ENCODE measurements at regions of chr17 and their contacts with region 1.

Region 1: DNA sequence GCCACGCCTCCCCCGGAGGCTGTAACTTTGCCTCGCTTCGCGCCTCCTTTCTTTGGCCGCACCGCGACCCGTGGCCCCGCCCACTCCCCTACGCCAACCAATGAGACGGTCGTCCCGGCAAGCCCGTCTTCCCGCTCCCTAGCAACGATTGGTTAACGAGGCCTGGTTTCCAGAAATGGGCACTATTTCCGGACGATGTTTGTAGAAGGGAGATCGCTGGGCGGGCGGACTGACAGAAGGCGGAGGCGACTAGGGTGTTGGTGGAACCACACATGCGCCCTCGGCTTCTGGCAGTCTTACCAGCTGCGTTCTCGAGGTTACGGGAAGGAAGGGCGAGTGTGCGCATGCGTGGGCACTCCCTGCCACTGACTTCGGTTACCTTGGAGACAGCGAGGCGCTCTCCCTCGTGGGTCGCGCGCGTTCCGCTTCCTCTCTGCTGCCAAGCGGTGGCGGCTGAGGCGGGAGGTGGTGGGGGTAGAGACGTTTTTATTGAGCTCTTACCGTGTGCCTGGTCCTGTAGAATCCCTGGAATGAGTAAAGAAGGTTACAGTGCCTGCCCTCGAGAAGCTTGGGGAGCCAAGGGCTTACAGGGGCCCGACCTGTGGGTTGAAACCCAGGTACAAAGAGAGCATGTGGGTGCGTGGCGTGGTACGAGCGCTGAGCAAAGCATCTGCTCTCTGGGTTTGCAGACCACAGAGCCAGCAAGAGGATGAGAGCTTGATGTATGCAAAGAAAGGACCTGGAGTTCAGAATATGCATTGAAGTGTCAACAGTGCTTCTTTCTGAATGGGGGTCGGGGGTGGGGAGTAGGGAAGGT is 500 bp upstream of the MAP3K14 start:
- DNase-seq: peak; percentile 100
- ATAC-seq: peak; percentile 80
- H3K4me3 ChIP-seq: peak overlapping the region; percentile 32 to 90 (median 62)
- H3K4me3 Mint-ChIP-seq: peak overlapping the region; percentile 92
- H3K27ac ChIP-seq: peak overlapping the region; percentile 47 to 93
- H3K27ac Mint-ChIP-seq: peak overlapping the region; percentile 95
- H3K4me1 ChIP-seq: peaks cover 39 to 41% of the 10 kb centered on the region in 2 donors
- H3K4me1 Mint-ChIP-seq: peaks cover 48% of the 10 kb centered on the region
- H3K27me3 ChIP-seq: no peaks in the 10 kb centered on the region
- H3K27me3 Mint-ChIP-seq: no peaks in the 10 kb centered on the region
- CTCF ChIP-seq: no peak

Region 2: DNA sequence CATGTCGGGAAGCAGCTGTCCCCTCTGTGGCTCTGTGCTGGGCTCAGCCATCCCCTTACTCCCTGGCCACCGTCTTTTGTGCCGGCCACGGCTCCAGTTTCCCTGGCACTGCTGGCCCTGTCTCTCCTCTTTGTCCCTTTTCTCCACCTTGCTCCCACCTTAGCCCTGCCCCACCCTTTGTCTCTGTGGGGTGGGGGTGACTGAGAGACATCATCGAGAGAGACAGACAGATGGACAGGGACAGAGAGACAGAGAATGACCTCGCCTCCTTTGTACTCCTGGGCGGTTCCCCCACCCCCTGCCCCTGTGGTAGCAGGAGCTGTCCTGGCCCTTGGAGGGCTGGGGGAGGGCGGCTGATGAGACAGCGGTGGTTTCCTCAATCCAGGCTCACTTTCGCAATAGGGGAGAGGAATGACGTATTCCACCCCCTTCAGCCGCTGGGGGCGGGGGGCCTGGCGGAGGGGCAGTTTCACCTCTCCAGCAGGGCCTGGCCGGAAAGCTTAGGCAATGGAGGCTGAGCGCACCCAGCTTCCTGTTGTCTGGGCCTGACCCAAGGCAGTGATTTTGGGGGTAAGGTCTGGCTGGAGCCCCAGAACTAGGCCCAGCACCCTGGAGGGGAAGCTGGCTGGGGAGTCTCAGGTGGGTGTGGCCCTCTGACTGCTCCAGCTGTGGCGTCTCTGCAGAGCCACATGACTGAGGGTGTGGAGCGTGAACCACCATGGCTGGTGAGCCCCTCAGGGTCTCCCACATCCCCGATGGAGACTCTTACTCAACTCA is 88.4 kb before region 1 on chr17:
- CTCF ChIA-PET with region 1: interaction called, 13 read pairs
- POLR2A ChIA-PET with region 1: interaction called, 17 read pairs
- intact Hi-C with region 1: loop called (anchors 1 kb)
- DNase-seq: peak; percentile 94
- ATAC-seq: peak; percentile 52
- H3K4me3 ChIP-seq: peak overlapping the region; percentile 8 to 96 (median 90)
- H3K4me3 Mint-ChIP-seq: peak overlapping the region; percentile 100
- H3K27ac ChIP-seq: peak overlapping the region; percentile 99 to 100
- H3K27ac Mint-ChIP-seq: peak overlapping the region; percentile 99
- H3K4me1 ChIP-seq: peaks cover 70 to 90% of the 10 kb centered on the region in 2 donors
- H3K4me1 Mint-ChIP-seq: peaks cover 95% of the 10 kb centered on the region
- H3K27me3 ChIP-seq: no peaks in the 10 kb centered on the region
- H3K27me3 Mint-ChIP-seq: no peaks in the 10 kb centered on the region
- CTCF ChIP-seq: no peak

Region 3: DNA sequence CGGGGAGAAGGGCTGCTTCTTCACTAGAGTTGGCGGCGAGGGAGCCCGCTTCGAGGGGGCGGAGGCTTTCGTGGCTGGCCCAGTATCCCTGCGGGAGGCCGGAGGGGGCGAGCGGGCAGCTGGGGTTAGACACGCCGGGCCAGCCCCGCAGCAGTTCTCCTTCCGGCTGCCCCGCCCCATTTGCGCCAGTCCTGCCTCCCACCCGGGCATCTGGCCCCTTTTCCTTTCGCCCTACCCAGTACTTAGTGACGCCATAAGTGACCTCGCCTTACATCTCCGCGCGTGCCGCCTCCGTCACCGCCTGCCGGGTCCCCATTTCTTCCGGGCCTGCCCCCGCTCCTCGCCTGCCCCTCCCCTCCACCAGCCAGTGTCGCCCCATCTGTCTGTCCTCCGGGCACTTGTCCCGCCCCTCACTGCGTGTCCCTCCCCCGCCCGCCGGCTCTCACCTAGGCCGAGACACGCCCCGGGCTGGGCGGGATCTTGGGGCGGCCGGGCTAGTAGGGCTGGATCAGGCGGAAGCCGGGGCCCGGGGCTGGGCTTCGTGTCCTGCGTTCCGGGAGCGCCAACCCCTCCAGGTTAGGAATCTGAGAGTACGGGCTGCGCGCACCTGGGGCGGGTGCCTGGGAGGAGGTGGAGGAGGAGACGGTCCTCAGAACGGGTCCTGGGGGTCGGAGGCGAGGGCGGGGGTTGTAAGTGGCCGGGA is 69.7 kb before region 1 on chr17:
- CTCF ChIA-PET with region 1: no interaction called
- POLR2A ChIA-PET with region 1: interaction called, 4 read pairs
- intact Hi-C with region 1: loop called (anchors 1 kb)
- DNase-seq: peak; percentile 97
- ATAC-seq: peak; percentile 88
- H3K4me3 ChIP-seq: peak overlapping the region; percentile 2 to 81 (median 78)
- H3K4me3 Mint-ChIP-seq: peak overlapping the region; percentile 92
- H3K27ac ChIP-seq: peak overlapping the region; percentile 82 to 92
- H3K27ac Mint-ChIP-seq: peak overlapping the region; percentile 96
- H3K4me1 ChIP-seq: peaks cover 20 to 22% of the 10 kb centered on the region in 2 donors
- H3K4me1 Mint-ChIP-seq: peaks cover 34% of the 10 kb centered on the region
- H3K27me3 ChIP-seq: no peaks in the 10 kb centered on the region
- H3K27me3 Mint-ChIP-seq: no peaks in the 10 kb centered on the region
- CTCF ChIP-seq: no peak

Region 4: GRCh38 chr17:45293413-45294211 is 23.7 kb before region 1 on chr17:
- CTCF ChIA-PET with region 1: interaction called, 38 read pairs
- POLR2A ChIA-PET with region 1: interaction called, 16 read pairs
- intact Hi-C with region 1: loop called (anchors 1 kb)
- DNase-seq: no peak
- ATAC-seq: no peak
- H3K4me3 ChIP-seq: no peak overlapping the region
- H3K4me3 Mint-ChIP-seq: peak overlapping the region; percentile 56
- H3K27ac ChIP-seq: no peak overlapping the region
- H3K27ac Mint-ChIP-seq: peak overlapping the region; percentile 86
- H3K4me1 ChIP-seq: peaks cover 75 to 84% of the 10 kb centered on the region in 2 donors
- H3K4me1 Mint-ChIP-seq: peaks cover 78% of the 10 kb centered on the region
- H3K27me3 ChIP-seq: no peaks in the 10 kb centered on the region
- H3K27me3 Mint-ChIP-seq: no peaks in the 10 kb centered on the region
- CTCF ChIP-seq: no peak

Region 5: DNA sequence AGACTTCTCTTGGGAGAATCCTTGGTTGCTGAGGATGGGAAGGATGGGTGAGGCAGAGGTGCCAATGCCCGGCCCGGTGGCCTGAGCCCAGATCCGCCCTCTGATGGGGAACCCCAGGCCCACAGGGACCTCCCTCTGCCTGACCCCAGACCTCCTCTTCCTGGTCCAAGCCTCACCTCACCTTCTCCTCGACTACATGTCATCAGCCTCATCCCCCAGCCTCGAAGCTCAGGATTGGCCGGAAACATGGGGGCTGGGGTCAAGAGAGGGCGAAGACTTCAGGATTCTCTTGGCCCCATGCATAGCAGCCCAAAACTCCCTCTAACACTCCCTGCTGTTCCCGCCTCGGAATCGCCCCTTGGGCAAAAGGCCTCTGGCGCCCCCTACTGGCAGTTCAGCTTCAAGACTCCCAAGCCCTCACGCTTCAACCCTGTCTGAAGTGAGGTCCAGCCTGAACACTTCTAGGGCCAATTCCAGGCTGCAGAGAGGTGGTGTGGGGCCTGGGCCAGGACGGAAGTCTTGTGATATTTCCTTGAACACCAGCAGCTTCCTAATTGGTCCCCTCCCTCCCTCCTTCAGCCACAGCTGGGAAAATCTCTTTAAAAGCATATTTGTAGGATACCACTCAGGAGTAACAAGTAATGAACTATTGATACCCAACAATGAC is 68.1 kb after region 1 on chr17:
- CTCF ChIA-PET with region 1: interaction called, 49 read pairs
- POLR2A ChIA-PET with region 1: no interaction called
- intact Hi-C with region 1: loop called (anchors 1 kb)
- DNase-seq: peak; percentile 89
- ATAC-seq: peak; percentile 96
- H3K4me3 ChIP-seq: no peak overlapping the region
- H3K4me3 Mint-ChIP-seq: no peak overlapping the region
- H3K27ac ChIP-seq: no peak overlapping the region
- H3K27ac Mint-ChIP-seq: peak overlapping the region; percentile 16
- H3K4me1 ChIP-seq: peaks cover 5 to 12% of the 10 kb centered on the region in 2 donors
- H3K4me1 Mint-ChIP-seq: peaks cover 17% of the 10 kb centered on the region
- H3K27me3 ChIP-seq: peaks cover 0 to 12% (median 2%) of the 10 kb centered on the region in 4 experiments
- H3K27me3 Mint-ChIP-seq: peaks cover 16% of the 10 kb centered on the region
- CTCF ChIP-seq: peak; percentile 98

Measured in B cell (primary cell).